AG04450 (cell line): ENCODE measurements at regions of chr11 and their contacts with region 1.

Region 1: GRCh38 chr11:107770551-107770951 is 58.7 kb upstream of the SLN start:
- DNase-seq: no peak
- H3K4me3 ChIP-seq: no peak overlapping the region
- H3K27ac ChIP-seq: no peak overlapping the region
- H3K27me3 ChIP-seq: no peaks in the 10 kb centered on the region
- CTCF ChIP-seq: no peak

Region 2: GRCh38 chr11:107565219-107565937 is 205.2 kb before region 1 on chr11 and contains the start of gene ALKBH8:
- CTCF ChIA-PET with region 1: interaction called, 67 read pairs
- POLR2A ChIA-PET with region 1: interaction called, 3 read pairs
- DNase-seq: no peak
- H3K4me3 ChIP-seq: peak within 1 kb of the TSS; percentile 96
- H3K27ac ChIP-seq: peak within 1 kb of the TSS; percentile 66
- H3K27me3 ChIP-seq: peaks cover 3% of the 10 kb centered on the region
- CTCF ChIP-seq: no peak
- polyA plus RNA-seq, gene ALKBH8: 4.8 and 7.3 TPM in 2 replicates

Region 3: GRCh38 chr11:107598225-107599139 is 172.1 kb before region 1 on chr11:
- CTCF ChIA-PET with region 1: interaction called, 17 read pairs
- POLR2A ChIA-PET with region 1: no interaction called
- DNase-seq: no peak
- H3K4me3 ChIP-seq: no peak overlapping the region
- H3K27ac ChIP-seq: no peak overlapping the region
- H3K27me3 ChIP-seq: peaks cover 14% of the 10 kb centered on the region
- CTCF ChIP-seq: peak; percentile 41

Region 4: DNA sequence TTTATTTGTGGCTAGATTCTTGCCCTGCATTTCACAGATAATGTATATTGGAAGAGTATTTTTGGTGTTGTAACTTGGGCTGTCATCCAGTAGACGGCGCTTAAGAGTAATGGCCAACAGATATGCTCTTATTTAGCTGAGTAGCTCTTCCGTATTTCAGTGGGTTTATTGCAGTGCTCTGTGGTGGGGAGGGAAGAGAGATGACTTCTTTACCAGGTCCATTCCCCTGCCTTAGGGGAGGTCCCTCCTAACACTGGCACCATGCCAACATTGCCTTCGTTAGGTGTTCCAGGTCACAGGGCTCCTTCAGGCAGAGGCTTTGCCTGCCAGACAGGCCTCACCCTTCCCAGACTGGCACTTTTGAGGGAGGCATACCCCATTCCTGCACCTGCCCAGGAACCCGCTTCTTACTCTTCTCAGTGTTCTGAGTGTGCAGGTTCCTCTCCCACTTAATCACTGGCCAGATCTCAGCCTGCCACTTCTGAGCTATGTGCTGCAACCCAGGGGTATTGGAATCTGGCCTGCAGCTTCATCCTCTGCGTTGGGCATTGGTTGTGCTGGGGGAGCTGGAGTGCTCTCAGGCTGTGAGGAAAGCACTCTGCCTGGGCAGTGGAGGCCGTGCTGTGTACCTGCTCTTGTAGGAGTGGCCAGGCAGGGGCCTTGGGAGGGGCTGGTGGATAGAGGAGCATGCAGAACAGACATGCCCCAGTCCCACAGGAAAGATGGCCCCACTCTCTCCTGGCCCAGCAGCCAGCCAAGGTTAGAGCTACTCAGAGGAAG is 29.3 kb before region 1 on chr11:
- CTCF ChIA-PET with region 1: interaction called, 17 read pairs
- POLR2A ChIA-PET with region 1: no interaction called
- DNase-seq: peak; percentile 13
- H3K4me3 ChIP-seq: no peak overlapping the region
- H3K27ac ChIP-seq: no peak overlapping the region
- H3K27me3 ChIP-seq: peaks cover 6% of the 10 kb centered on the region
- CTCF ChIP-seq: peak; percentile 80

Region 5: GRCh38 chr11:107783121-107783520 is 12.6 kb after region 1 on chr11:
- CTCF ChIA-PET with region 1: interaction called, 14 read pairs
- POLR2A ChIA-PET with region 1: no interaction called
- DNase-seq: no peak
- H3K4me3 ChIP-seq: no peak overlapping the region
- H3K27ac ChIP-seq: no peak overlapping the region
- H3K27me3 ChIP-seq: no peaks in the 10 kb centered on the region
- CTCF ChIP-seq: no peak

Region 6: GRCh38 chr11:108008656-108009496 is 238.3 kb after region 1 on chr11 and contains the start of gene CUL5:
- CTCF ChIA-PET with region 1: no interaction called
- POLR2A ChIA-PET with region 1: no interaction called
- DNase-seq: peak; percentile 83
- H3K4me3 ChIP-seq: peak within 1 kb of the TSS; percentile 100
- H3K27ac ChIP-seq: peak within 1 kb of the TSS; percentile 97
- H3K27me3 ChIP-seq: no peaks in the 10 kb centered on the region
- CTCF ChIP-seq: peak; percentile 90
- polyA plus RNA-seq, gene CUL5: 17.1 and 26.0 TPM in 2 replicates